HCT116 (cell line): ENCODE measurements at regions of chr6 and their contacts with region 1.

Region 1: DNA sequence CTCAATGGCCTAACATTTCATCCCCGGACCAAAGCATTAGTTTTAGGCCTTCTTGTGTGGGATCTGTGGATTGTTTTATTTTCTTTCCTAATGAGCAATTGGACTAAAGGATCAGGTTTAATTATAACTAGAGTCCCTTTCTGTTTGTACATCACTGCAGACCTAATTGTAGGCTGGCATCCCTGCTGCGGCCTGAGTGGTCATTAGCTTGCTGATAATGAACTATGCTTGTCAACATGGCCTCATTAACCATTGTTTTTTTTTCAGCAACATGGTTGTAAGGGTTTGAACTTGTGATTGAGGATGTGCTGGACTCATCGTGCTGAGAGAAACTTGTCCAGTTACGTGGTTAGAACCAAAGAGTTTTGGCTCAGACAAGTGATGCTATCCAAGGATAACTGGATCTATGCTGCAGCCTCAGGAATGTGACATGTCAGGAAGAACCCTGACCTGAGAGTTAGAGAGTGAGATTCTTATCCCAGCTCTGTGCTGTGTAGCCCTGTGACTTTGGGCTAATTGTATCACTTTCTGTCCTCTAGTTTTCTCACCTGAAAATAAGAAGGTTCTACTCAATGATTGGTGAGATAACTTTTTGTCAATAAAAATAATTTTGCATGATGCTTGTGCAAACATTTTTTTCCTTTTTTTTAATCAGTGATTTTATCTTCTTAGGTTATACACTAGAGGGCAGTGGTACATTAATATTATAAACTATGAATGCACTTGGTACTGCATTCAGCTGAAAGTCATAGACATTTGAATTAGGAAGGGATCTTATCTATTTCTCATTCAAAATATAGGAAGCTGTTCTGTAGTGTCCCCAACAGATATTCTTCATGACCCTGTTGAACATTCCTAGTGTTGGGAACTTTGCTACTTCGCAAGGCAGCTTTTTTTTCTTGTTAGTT is 140.9 kb downstream of the RNF144B start:
- DNase-seq: no peak
- ATAC-seq: peak; percentile 63
- H3K4me3 ChIP-seq: no peak overlapping the region
- H3K27ac ChIP-seq: no peak overlapping the region
- H3K4me1 ChIP-seq: no peaks in the 10 kb centered on the region
- H3K27me3 ChIP-seq: no peaks in the 10 kb centered on the region
- CTCF ChIP-seq: peak; percentile 8 to 66 (median 32); a peak in 3 of 6 replicates
- POLR2A ChIP-seq: no peak
- RAD21 ChIP-seq: peak; percentile 69

Region 2: DNA sequence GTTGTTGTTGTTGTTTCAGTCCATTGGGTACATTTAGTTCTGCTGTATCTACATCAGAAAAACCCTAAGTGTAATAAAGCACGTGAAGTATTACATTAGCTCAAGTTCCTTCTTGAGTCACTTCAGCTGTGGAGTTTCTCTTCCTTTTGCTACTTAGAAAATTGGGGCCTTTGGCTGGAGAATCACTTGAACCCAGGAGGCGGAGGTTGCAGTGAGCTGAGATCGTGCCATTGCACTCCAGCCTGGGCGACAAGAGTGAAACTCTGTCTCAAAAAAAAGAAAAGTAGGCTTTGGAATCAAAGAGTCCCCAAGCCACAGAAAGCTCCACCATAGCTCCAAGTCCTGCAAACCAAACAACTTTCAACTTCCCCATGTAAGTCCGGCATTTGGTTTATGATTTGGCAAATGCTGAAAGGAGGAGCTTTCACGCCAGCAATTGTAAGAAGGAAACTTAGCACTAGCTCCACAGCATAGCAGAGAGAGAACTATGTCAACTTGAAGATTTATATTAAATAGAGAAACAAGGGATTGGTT is 197.5 kb before region 1 on chr6:
- CTCF ChIA-PET with region 1: no interaction called
- POLR2A ChIA-PET with region 1: no interaction called
- RAD21 ChIA-PET with region 1: no interaction called
- intact Hi-C with region 1: no loop called
- DNase-seq: no peak
- ATAC-seq: no peak
- H3K4me3 ChIP-seq: no peak overlapping the region
- H3K27ac ChIP-seq: no peak overlapping the region
- H3K4me1 ChIP-seq: no peaks in the 10 kb centered on the region
- H3K27me3 ChIP-seq: no peaks in the 10 kb centered on the region
- CTCF ChIP-seq: no peak
- POLR2A ChIP-seq: no peak
- RAD21 ChIP-seq: no peak

Region 3: GRCh38 chr6:18680842-18681241 is 152.8 kb after region 1 on chr6:
- CTCF ChIA-PET with region 1: no interaction called
- POLR2A ChIA-PET with region 1: no interaction called
- RAD21 ChIA-PET with region 1: no interaction called
- intact Hi-C with region 1: loop called (anchors 5 kb)
- DNase-seq: no peak
- ATAC-seq: peak; percentile 63; the same call in 1 of the 2 replicates
- H3K4me3 ChIP-seq: no peak overlapping the region
- H3K27ac ChIP-seq: no peak overlapping the region
- H3K4me1 ChIP-seq: no peaks in the 10 kb centered on the region
- H3K27me3 ChIP-seq: no peaks in the 10 kb centered on the region
- CTCF ChIP-seq: peak in 2 of 3 experiments; percentile 27 to 36; a peak in 2 of 6 replicates
- POLR2A ChIP-seq: no peak
- RAD21 ChIP-seq: no peak; the same call in 1 of the 2 replicates

Region 4: DNA sequence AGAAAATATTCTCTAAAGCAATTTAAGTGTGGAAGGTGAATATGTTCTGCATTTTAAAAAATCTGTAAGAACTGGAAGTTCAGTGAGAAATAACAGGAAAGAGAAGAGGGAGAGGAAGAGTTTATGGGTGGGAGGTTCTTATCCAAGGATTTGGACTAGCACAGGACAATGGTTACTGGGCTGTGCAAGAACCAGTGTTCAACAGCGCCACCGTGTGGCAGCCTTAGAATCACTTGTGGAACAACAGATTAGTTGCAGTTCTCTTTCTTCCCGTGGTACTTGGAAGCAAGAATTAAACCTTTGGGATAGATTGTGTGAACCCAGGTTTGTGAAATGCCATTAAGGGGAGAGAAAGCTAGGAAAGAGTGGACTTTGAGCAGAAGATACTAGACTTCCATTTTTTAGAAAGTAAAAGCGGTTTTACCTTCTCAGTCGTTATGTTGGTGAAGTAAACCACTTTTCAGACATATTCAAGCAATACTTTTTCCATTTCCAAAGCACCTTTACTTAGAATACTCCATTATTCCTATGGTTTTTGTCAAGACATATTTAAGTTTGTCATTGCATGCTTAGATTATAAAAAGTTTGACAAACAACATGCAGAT is 295.8 kb after region 1 on chr6:
- CTCF ChIA-PET with region 1: no interaction called
- POLR2A ChIA-PET with region 1: no interaction called
- RAD21 ChIA-PET with region 1: no interaction called
- intact Hi-C with region 1: loop called (anchors 5 kb)
- DNase-seq: peak; percentile 74
- ATAC-seq: no peak
- H3K4me3 ChIP-seq: no peak overlapping the region
- H3K27ac ChIP-seq: no peak overlapping the region
- H3K4me1 ChIP-seq: no peaks in the 10 kb centered on the region
- H3K27me3 ChIP-seq: no peaks in the 10 kb centered on the region
- CTCF ChIP-seq: peak; percentile 33 to 87 (median 69); a peak in 5 of 6 replicates
- POLR2A ChIP-seq: no peak
- RAD21 ChIP-seq: peak; percentile 52

Region 5: DNA sequence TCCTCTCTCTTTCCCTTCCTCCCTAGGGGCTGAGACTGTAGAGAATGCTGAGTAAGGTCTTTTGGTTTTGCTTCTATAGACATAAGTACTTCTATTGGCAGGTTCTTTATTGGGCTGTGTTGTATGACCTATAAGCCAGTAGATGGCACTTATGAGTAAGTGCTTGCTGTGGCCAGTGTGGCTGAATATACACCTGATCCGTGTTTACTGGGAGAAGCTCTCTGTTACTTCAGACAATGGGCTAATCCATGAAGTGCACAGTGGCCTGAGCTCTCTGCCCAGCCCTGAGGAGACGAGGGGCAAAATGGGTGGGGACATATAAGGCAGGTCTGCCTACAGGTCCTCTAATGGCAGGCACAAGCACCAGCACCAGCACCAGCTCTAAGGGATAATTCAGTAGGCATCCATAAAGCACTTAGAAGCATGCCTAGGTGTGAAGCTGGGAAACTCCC is 469.3 kb after region 1 on chr6:
- CTCF ChIA-PET with region 1: no interaction called
- POLR2A ChIA-PET with region 1: no interaction called
- RAD21 ChIA-PET with region 1: no interaction called
- intact Hi-C with region 1: loop called (anchors 5 kb)
- DNase-seq: peak; percentile 52
- ATAC-seq: peak; percentile 100
- H3K4me3 ChIP-seq: no peak overlapping the region
- H3K27ac ChIP-seq: no peak overlapping the region
- H3K4me1 ChIP-seq: no peaks in the 10 kb centered on the region
- H3K27me3 ChIP-seq: no peaks in the 10 kb centered on the region
- CTCF ChIP-seq: peak; percentile 45 to 68 (median 67); a peak in 5 of 6 replicates
- POLR2A ChIP-seq: no peak
- RAD21 ChIP-seq: peak; percentile 59